ENCODE measurements at regions of chr2 and their contacts with region 1.

Region 1: GRCh38 chr2:88190808-88191721 is 20.9 kb downstream of the THNSL2 start:
- DNase-seq: no peak
- ATAC-seq: peak; percentile 53 to 56

Region 2: DNA sequence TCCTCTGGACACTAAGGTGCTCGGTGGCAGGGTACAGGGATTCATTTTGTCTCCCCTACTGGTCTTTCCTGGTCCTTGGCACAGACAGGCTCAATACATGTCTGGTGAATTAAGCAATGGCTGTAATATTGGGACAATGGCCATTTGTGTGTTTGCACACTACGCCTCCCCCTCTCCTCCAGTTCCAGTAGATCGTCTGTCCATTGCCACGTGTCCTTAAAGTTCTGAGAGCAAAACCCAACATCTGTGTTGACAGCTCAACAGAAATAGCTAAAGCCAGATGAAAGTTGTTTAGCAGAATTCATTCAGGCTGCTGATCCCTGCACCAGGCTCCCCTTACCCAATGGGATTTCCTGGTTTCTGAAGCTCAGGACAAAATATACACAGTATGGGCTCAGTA is 54.2 kb before region 1 on chr2:
- intact Hi-C with region 1: no loop called
- DNase-seq: no peak
- ATAC-seq: no peak

Region 3: DNA sequence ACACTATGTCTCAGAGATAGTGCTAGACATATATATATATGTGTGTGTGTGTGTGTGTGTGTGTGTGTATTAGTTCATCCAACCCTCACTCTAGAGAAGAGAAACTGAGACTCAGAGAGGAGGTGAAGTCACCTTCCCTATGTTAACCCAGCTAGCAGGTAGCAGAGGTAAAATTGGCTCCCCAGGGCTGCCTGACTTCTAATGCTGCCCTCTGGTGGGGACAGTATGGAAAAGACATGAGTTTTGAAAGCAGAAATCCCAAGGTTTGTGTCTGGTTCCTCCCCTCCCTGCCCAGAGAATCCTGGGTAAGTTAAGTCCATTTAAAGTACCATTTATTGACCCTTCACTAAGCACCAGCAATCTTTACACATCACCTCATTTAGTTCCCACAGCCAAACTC is 116.8 kb after region 1 on chr2:
- intact Hi-C with region 1: loop called (anchors 5 kb)
- DNase-seq: no peak
- ATAC-seq: no peak

Region 4: GRCh38 chr2:88554189-88554588 is 363.1 kb after region 1 on chr2:
- intact Hi-C with region 1: loop called in 1 of 2 experiments (anchors 10 kb)
- DNase-seq: no peak
- ATAC-seq: no peak

Region 5: GRCh38 chr2:88669371-88670214 is 478.5 kb after region 1 on chr2:
- intact Hi-C with region 1: loop called in 1 of 2 experiments (anchors 10 kb)
- DNase-seq: no peak
- ATAC-seq: peak; percentile 61 to 73

Measured in left cardiac atrium (tissue), 4 donors.